SK-N-SH (cell line): ENCODE measurements at regions of chr7 and their contacts with region 1.

Region 1: DNA sequence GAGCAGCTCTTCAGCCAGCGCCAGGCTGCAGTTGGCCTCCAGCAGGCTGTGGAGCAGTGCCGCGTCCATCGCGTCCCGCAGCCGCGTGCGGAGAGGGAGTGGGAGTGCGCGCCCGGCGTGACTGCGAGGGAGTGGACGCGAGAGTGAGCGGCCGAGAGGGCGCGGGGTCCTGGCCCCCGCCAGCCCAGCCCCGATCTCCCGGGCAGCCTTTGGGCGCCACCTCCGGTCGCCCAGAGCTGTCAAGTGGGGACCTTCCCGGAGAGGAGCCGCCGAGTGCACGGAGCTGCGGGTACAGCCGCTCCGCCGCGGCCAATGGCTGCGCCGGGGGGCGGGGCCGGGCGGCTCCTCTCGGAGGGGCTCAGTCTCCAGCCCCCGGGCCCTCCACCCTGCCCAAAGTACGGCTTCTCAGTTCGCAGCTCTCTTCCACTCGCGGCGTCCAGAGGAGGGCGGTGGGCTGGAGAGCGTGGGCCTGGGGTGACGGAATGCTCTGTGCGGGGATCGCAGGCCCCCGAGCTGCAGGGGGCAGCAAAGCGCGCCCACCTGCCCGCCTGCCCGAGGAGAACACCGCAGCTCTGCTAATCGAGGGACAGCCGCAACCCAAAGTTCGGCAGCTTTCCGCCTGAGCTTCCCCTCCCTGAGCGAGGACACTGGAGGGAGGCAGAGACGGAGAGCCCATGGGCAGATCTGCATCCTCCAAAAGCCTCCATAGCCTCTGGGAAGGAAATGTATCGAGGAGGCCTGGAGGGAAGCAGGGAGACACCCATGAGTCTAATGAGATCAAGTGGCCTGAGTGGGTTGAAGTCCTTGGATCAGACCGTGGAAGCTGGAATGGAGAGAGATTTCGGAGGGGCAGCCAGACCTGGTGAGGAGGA is at the start of gene CRHR2:
- DNase-seq: peak; percentile 94
- H3K4me3 ChIP-seq: peak within 1 kb of the TSS; percentile 34 to 46; a peak in 3 of 4 replicates
- H3K27ac ChIP-seq: no peak within 1 kb of the TSS
- H3K4me1 ChIP-seq: peaks cover 0 to 27% of the 10 kb centered on the region in 2 experiments; a peak in 1 of 4 replicates
- H3K27me3 ChIP-seq: peaks cover 62% of the 10 kb centered on the region
- CTCF ChIP-seq: peak; percentile 37
- EP300 ChIP-seq: no peak
- RAD21 ChIP-seq: no peak; the same call in 1 of the 2 replicates
- polyA plus RNA-seq, gene CRHR2: not detected in 2 replicates

Region 2: GRCh38 chr7:30663397-30663796 is 19.1 kb before region 1 on chr7:
- CTCF ChIA-PET with region 1: interaction called, 15 read pairs
- POLR2A ChIA-PET with region 1: no interaction called
- DNase-seq: no peak
- H3K4me3 ChIP-seq: no peak overlapping the region
- H3K27ac ChIP-seq: no peak overlapping the region
- H3K4me1 ChIP-seq: peaks cover 0 to 12% of the 10 kb centered on the region in 2 experiments; a peak in 2 of 4 replicates
- H3K27me3 ChIP-seq: peaks cover 8% of the 10 kb centered on the region
- CTCF ChIP-seq: no peak
- EP300 ChIP-seq: no peak
- RAD21 ChIP-seq: no peak

Region 3: DNA sequence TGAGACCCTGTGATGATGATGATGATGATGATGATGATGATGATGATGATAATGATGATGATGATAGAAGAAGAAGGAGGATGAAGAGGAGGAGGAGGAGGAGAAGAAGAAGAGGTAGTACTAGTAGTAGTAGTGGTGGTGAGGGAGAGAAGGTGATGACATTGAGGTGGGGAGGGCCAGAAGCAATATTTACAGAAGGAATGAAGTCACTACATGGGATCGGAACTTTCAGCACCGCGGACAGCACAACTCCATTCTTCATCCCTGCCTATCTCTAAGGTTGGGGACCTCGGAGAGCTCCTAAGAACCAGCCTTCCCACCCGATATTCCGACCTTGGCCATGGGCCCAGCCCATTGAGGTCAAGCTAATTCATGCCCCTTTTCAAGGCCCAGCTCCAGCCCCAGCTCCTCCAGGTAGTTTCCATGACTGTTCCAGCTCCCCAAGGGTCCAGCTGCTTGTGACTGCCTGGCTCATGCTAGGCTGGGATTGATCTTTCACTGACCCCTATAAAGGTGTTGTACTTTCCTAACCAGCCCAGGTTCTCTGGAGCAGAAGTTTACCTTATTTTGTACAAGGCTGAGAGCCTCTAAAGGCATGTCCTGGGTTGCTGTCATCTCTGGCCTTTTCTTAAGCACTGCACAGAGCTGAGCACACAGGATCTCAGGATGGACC is 10.5 kb before region 1 on chr7:
- CTCF ChIA-PET with region 1: interaction called, 24 read pairs
- POLR2A ChIA-PET with region 1: interaction called, 3 read pairs
- DNase-seq: no peak
- H3K4me3 ChIP-seq: no peak overlapping the region
- H3K27ac ChIP-seq: no peak overlapping the region
- H3K4me1 ChIP-seq: peaks cover 0 to 7% of the 10 kb centered on the region in 2 experiments; a peak in 2 of 4 replicates
- H3K27me3 ChIP-seq: peaks cover 10% of the 10 kb centered on the region; the same call in 1 of the 2 replicates
- CTCF ChIP-seq: no peak
- EP300 ChIP-seq: no peak
- RAD21 ChIP-seq: no peak

Region 4: GRCh38 chr7:30694218-30694745 is 11.8 kb after region 1 on chr7:
- CTCF ChIA-PET with region 1: interaction called, 39 read pairs
- POLR2A ChIA-PET with region 1: no interaction called
- DNase-seq: no peak
- H3K4me3 ChIP-seq: no peak overlapping the region
- H3K27ac ChIP-seq: no peak overlapping the region
- H3K4me1 ChIP-seq: no peaks in the 10 kb centered on the region
- H3K27me3 ChIP-seq: peaks cover 54% of the 10 kb centered on the region
- CTCF ChIP-seq: no peak
- EP300 ChIP-seq: no peak
- RAD21 ChIP-seq: no peak

Region 5: DNA sequence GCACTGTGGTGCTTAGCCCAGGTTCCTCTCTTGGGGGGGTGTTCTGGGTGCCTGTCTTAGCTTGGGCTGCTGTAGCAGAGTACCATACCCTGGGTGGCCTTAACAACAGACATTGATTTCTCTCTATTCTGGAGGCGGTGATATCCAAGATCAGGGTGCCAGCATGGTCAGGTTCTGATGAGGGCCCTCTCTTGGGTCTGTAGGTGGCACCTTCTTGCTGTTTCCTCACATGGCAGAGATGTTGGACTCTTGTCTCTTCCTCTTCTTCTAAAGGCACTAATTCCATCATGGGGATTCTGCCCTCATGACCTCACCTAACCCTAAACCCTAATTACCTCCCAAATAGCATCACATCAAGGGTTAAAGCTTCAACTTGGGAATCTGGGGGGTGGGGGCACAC is 19.8 kb after region 1 on chr7:
- CTCF ChIA-PET with region 1: interaction called, 15 read pairs
- POLR2A ChIA-PET with region 1: no interaction called
- DNase-seq: no peak
- H3K4me3 ChIP-seq: no peak overlapping the region
- H3K27ac ChIP-seq: no peak overlapping the region
- H3K4me1 ChIP-seq: peaks cover 0 to 9% of the 10 kb centered on the region in 2 experiments; a peak in 1 of 4 replicates
- H3K27me3 ChIP-seq: peaks cover 31% of the 10 kb centered on the region
- CTCF ChIP-seq: no peak; the same call in 1 of the 2 replicates
- EP300 ChIP-seq: no peak
- RAD21 ChIP-seq: no peak

Region 6: DNA sequence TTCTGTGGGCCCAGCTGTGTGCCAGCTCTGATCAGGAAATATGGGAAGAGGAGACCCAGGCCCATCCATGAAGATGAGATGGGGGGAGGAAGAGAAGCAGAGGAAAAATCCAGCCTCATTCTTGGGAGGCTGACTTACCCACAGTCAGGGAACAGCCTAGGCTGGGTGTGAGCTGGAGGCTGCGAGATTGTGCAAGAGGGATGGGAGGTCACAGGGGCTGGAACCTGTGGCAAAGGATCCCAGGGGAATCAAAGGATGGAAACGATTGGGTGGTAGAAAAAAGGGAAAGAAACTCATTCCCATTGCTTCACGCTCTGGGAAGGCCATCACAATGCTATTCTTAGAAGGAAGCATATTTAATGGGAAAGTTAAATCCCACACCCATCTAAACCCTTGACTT is 26.5 kb after region 1 on chr7:
- CTCF ChIA-PET with region 1: interaction called, 15 read pairs
- POLR2A ChIA-PET with region 1: no interaction called
- DNase-seq: no peak
- H3K4me3 ChIP-seq: no peak overlapping the region
- H3K27ac ChIP-seq: no peak overlapping the region
- H3K4me1 ChIP-seq: peaks cover 0 to 9% of the 10 kb centered on the region in 2 experiments; a peak in 1 of 4 replicates
- H3K27me3 ChIP-seq: peaks cover 9% of the 10 kb centered on the region
- CTCF ChIP-seq: no peak
- EP300 ChIP-seq: no peak
- RAD21 ChIP-seq: no peak

Region 7: GRCh38 chr7:30750683-30751650 is 68.5 kb after region 1 on chr7:
- CTCF ChIA-PET with region 1: interaction called, 14 read pairs
- POLR2A ChIA-PET with region 1: no interaction called
- DNase-seq: no peak
- H3K4me3 ChIP-seq: no peak overlapping the region
- H3K27ac ChIP-seq: no peak overlapping the region
- H3K4me1 ChIP-seq: peaks cover 0 to 18% of the 10 kb centered on the region in 2 experiments; a peak in 2 of 4 replicates
- H3K27me3 ChIP-seq: peaks cover 26% of the 10 kb centered on the region
- CTCF ChIP-seq: no peak
- EP300 ChIP-seq: no peak
- RAD21 ChIP-seq: no peak